Pancreas (tissue), 10 donors: ENCODE measurements at regions of chr5 and their contacts with region 1.

Region 1: DNA sequence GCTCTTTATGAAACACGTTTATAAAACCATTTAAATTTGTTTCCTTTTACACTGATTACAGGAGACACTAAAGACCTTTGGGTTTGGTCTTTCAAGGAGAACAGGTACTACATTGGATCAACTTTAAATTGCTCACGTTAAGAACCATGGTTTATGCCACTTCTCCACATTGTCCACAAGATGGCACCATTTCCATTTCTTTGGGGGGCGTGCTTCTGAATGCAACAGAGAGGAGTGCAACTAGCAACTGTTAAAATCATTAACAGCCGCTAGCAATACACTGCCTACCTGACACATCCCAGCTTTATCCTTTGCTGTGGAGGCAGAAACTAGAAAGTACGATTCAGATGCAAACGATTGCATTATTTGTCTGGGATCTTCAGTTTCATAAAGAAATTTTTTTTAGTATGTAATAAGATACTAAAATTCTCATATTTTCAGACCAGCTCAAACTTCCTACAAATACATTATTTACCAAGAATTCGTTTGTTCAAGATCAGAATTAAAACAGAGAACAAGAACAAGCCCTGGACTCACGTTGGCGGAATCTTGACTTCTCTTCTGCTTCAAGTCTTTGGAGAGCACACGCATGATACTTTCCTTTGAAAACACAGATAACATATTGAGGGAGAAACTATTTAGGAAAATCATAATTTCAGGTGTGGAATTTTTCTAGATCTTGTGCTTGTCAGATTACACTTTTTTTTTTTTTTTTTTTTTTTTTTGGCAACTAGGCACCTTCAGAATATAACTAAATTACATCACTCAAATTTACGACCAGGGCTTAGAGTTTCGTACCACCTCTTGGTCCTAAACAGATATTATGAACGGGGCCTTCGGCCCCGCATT is 702 bp downstream of the CDC20B start:
- DNase-seq: peak in 3 of 6 donors; percentile 55 to 65 (median 55)
- ATAC-seq: peak; percentile 69 to 88 (median 76)
- H3K4me3 ChIP-seq: peak overlapping the region; percentile 13 to 55 (median 33)
- H3K27ac ChIP-seq: no peak overlapping the region
- H3K4me1 ChIP-seq: peaks cover 0 to 28% (median 18%) of the 10 kb centered on the region in 3 donors
- H3K27me3 ChIP-seq: peaks cover 0 to 5% (median 0%) of the 10 kb centered on the region in 4 donors
- CTCF ChIP-seq: peak; percentile 64 to 82 (median 68)

Region 2: GRCh38 chr5:55226027-55226933 is 54.0 kb after region 1 on chr5:
- intact Hi-C with region 1: loop called in 2 of 3 experiments (anchors 5 to 10 kb)
- DNase-seq: peak in 5 of 6 donors; percentile 66 to 87 (median 70)
- ATAC-seq: peak; percentile 63 to 75 (median 70)
- H3K4me3 ChIP-seq: peak overlapping the region; percentile 26 to 71 (median 44)
- H3K27ac ChIP-seq: peak overlapping the region in 2 of 4 donors; percentile 29 to 52
- H3K4me1 ChIP-seq: peaks cover 0 to 7% (median 0%) of the 10 kb centered on the region in 3 donors
- H3K27me3 ChIP-seq: no peaks in the 10 kb centered on the region
- CTCF ChIP-seq: peak; percentile 29 to 54 (median 43)

Region 3: DNA sequence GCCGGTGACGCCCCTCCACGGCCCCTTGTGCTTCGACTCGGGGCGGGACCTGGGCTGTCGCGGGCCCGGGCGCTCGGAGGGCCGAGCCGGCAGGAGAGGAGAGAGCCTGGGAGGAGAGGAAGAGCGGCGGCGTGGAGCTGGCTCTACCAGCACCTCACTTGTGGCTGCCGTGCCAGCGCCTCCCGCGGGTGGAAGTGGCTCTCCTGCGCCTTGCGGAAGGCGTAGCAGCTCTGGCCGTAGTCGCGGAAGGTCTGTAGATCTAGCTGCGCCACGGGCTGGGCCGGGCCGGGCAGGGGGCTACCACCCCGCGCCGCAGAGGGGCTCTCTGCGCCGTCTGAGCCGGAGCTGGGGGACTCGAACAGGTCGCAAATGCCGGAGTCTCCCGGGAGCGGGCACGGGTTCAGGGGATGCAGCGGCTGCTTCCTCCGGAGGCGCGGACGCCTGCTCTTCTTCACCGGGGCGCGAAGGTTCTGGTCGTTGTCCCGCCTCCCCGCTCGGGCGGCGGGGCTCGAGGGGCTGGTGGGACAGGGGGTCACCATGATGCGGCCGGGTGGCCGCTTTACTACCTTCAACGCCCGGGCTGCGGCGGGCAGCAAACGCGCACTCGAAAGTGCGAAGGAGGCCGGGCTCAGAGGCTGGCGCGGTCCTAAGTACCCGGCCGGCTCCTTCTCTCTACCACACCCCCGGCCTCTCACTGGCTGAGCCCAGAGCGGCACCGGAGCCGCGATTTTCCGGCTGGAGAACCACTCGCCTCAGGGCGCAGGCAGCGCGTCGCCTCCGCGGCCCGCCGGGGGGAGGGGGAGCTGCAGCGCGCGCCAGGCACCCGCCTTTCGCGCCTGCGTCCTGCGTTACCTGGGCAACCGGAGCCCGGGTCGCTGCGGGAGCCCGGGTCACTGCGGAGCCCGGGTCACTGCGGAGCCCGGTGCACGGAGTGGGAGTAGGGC is 61.0 kb after region 1 on chr5 and contains the start of gene CCNO:
- intact Hi-C with region 1: loop called in 2 of 3 experiments (anchors 5 to 10 kb)
- DNase-seq: peak; percentile 86 to 94 (median 90)
- ATAC-seq: peak; percentile 79 to 89 (median 88)
- H3K4me3 ChIP-seq: peak within 1 kb of the TSS; percentile 55 to 81 (median 66)
- H3K27ac ChIP-seq: peak within 1 kb of the TSS; percentile 54 to 90 (median 82)
- H3K4me1 ChIP-seq: peaks cover 0 to 5% (median 0%) of the 10 kb centered on the region in 3 donors
- H3K27me3 ChIP-seq: peaks cover 0 to 3% (median 0%) of the 10 kb centered on the region in 4 donors
- CTCF ChIP-seq: no peak
- total RNA-seq, gene CCNO: 5.1 to 13.3 (median 7.6) TPM